ENCODE measurements at regions of chr2 and their contacts with region 1.

Region 1: GRCh38 chr2:38602732-38603401 is at the start of gene HNRNPLL:
- DNase-seq: peak; percentile 97
- H3K4me3 Mint-ChIP-seq: peak within 1 kb of the TSS; percentile 89
- H3K27ac Mint-ChIP-seq: peak within 1 kb of the TSS; percentile 89
- H3K4me1 Mint-ChIP-seq: peaks cover 46% of the 10 kb centered on the region
- H3K27me3 Mint-ChIP-seq: no peaks in the 10 kb centered on the region
- total RNA-seq, gene HNRNPLL: 104 to 119 TPM

Region 2: GRCh38 chr2:38626326-38627035 is 23.6 kb after region 1 on chr2:
- CTCF ChIA-PET with region 1: interaction called, 13 read pairs
- POLR2A ChIA-PET with region 1: interaction called, 29 read pairs
- DNase-seq: peak; percentile 72
- H3K4me3 Mint-ChIP-seq: peak overlapping the region; percentile 2
- H3K27ac Mint-ChIP-seq: peak overlapping the region; percentile 69
- H3K4me1 Mint-ChIP-seq: peaks cover 36% of the 10 kb centered on the region
- H3K27me3 Mint-ChIP-seq: no peaks in the 10 kb centered on the region

Region 3: DNA sequence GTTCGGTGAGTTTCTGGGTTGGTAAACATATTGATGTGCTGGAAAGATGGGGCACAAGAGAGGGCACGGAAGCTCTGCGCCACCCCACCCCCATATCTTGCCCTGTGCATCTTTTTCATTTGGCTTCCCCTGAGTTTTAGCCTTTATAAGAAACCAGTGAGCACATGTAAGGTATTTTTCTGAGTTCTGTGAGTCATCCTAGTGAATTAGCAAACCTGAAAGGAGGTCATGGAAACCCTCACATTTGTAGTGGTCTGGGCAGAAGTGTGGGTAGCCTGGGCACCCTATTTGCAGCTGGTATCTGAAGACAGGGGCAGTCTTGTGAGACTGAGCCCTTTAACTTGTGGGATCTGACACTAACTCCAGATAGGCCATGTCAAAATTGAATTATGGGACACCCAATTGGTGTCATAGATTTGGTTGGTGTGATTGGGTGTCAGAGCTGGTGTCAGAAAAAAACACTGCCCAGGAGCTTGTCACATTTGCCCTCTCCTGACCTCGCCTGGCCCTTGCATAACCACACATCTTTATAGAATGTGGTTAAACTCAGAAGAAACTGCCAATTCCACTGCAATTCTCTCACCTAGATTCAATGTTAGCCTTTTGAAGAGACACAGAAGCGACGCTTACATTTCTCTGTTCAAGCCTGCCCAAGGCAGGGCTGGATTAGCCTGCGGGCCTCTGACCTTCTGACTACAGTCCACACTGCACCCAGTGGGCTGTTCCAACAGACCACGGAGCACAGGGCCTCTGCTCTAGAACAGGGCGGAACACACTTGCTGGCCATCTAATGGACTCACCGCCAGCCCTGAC is 51.1 kb after region 1 on chr2:
- CTCF ChIA-PET with region 1: interaction called, 46 read pairs
- POLR2A ChIA-PET with region 1: interaction called, 646 read pairs
- DNase-seq: peak; percentile 74
- H3K4me3 Mint-ChIP-seq: peak overlapping the region; percentile 64
- H3K27ac Mint-ChIP-seq: peak overlapping the region; percentile 95
- H3K4me1 Mint-ChIP-seq: peaks cover 83% of the 10 kb centered on the region
- H3K27me3 Mint-ChIP-seq: no peaks in the 10 kb centered on the region

Region 4: DNA sequence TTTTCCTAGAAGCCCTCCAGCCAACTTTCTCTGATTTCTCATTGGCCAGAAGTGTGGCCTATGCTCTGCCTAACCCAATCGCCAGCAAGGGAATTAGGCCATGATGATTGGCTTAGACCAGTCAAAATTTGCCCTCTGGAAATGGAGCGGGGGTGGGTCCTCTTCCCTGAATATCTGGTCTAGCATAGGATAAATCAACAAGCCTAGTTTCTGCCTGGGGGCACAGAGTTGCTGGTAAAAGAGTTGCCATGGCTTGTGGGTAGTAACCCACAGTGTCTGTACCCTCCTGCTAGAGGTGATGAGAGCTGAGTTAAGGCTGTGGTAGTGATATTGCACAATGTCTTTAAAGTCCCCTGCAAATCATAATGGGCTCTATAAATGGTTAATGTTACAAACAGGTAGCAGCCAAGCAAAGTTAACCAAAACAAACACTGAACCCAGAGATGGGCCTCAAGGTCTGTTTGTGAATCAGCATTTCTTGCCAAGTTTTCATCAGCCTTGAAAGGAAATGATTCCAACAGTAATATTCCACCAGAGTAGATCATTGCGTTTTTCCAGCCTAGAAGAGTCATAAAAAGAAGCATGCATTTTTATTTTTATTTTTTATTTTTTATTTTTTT is 82.4 kb after region 1 on chr2:
- CTCF ChIA-PET with region 1: interaction called, 109 read pairs
- POLR2A ChIA-PET with region 1: interaction called, 75 read pairs
- DNase-seq: no peak
- H3K4me3 Mint-ChIP-seq: no peak overlapping the region
- H3K27ac Mint-ChIP-seq: peak overlapping the region; percentile 12
- H3K4me1 Mint-ChIP-seq: peaks cover 76% of the 10 kb centered on the region
- H3K27me3 Mint-ChIP-seq: no peaks in the 10 kb centered on the region

Region 5: GRCh38 chr2:38702413-38702812 is 99.5 kb after region 1 on chr2:
- CTCF ChIA-PET with region 1: interaction called, 28 read pairs
- POLR2A ChIA-PET with region 1: interaction called, 19 read pairs
- DNase-seq: no peak
- H3K4me3 Mint-ChIP-seq: peak overlapping the region; percentile 6
- H3K27ac Mint-ChIP-seq: peak overlapping the region; percentile 52
- H3K4me1 Mint-ChIP-seq: peaks cover 69% of the 10 kb centered on the region
- H3K27me3 Mint-ChIP-seq: no peaks in the 10 kb centered on the region

Measured in activated CD4-positive, alpha-beta memory T cell treated with anti-CD3 and anti-CD28 coated beads, Interleukin-2, amount 10 ng/mL, durations not matched to agents 7 days and 5 days (primary cell).